K562 (cell line): ENCODE measurements at regions of chr11 and their contacts with region 1.

Region 1: DNA sequence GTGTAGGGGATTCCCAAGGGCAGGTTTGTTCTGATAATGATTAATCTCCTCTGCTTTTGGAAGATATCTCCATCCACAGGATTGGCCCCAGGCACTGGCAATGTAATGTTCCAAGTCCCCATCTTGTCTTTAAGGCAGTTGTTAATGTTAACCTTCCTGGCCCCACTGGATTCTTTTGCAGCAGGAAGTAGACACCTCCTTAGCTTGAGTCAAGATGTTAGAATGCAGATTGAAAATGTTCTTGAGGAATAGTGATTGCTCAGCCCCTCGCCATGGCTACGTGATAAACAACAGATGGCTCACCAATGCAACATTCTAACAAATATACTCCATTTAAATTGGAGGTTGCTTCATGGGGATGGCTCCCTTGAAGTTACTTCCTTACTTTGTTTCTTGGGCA is 7.3 kb downstream of the HEPHL1 start:
- DNase-seq: no peak
- ATAC-seq: no peak
- H3K4me3 ChIP-seq: no peak overlapping the region
- H3K27ac ChIP-seq: no peak overlapping the region
- H3K4me1 ChIP-seq: peaks cover 0 to 5% of the 10 kb centered on the region in 2 experiments; a peak in 3 of 5 replicates
- H3K27me3 ChIP-seq: no peaks in the 10 kb centered on the region
- CTCF ChIP-seq: no peak
- EP300 ChIP-seq: no peak
- POLR2A ChIP-seq: no peak
- RAD21 ChIP-seq: no peak

Region 2: DNA sequence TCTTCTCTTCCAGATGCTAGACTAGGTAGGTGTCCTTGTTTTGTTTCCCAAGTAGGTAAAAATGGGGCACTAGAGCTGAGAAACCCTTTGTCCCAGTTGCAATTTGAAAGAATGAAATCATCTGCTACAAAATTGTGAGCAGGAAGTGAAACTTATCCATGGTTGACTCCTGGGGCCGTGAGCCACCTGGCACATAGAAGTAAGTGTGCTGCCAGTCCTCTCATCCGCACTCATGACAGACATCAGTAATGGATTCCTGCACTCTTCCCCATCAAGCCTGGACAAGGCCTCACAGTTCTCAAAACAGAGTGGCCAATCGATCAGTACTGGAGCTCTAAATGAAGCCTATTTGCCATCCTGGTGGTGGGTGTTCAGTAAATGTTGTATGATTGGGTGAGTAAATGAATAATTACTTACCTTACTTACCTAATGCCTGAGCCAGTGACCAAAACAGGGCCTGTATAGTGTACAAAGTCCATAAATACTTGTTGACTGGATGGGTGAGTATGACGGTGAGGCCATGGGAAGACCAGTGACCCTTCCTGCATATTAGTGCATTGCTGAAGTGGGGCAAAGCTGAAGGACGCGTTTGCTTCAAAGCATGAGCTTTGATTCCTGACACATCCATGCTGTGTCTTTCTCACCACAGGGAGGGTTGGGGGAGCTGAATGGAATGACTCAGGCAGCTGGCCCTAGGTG is 76.2 kb before region 1 on chr11:
- CTCF ChIA-PET with region 1: no interaction called
- POLR2A ChIA-PET with region 1: no interaction called
- in situ Hi-C with region 1: loop called (anchors 5 kb)
- intact Hi-C with region 1: no loop called
- DNase-seq: no peak
- ATAC-seq: no peak
- H3K4me3 ChIP-seq: no peak overlapping the region
- H3K27ac ChIP-seq: no peak overlapping the region
- H3K4me1 ChIP-seq: no peaks in the 10 kb centered on the region
- H3K27me3 ChIP-seq: no peaks in the 10 kb centered on the region
- CTCF ChIP-seq: no peak
- EP300 ChIP-seq: no peak
- POLR2A ChIP-seq: no peak
- RAD21 ChIP-seq: no peak

Region 3: DNA sequence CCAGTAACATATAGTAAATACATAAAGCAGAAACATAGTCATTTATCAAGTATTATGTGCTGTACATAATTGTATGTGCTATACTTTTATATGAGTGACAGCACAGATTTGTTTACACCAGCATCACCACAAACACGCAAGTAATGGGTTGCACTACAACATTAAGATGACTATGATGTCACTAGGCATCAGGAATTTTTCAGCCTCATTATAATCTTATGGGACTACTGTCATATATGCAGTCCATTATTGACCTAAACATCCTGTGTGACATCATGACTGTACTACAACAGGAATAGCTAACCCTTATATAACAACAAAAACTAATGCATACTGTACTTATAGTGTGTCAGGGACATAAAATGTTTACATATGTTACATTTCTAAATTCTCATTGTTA is 225.8 kb after region 1 on chr11:
- CTCF ChIA-PET with region 1: no interaction called
- POLR2A ChIA-PET with region 1: no interaction called
- in situ Hi-C with region 1: no loop called
- intact Hi-C with region 1: no loop called
- DNase-seq: no peak
- ATAC-seq: no peak
- H3K4me3 ChIP-seq: no peak overlapping the region
- H3K27ac ChIP-seq: no peak overlapping the region
- H3K4me1 ChIP-seq: no peaks in the 10 kb centered on the region
- H3K27me3 ChIP-seq: no peaks in the 10 kb centered on the region
- CTCF ChIP-seq: no peak
- EP300 ChIP-seq: no peak
- POLR2A ChIP-seq: no peak
- RAD21 ChIP-seq: no peak